Breast epithelium (tissue), 4 donors: ENCODE measurements at regions of chr5 and their contacts with region 1.

Region 1: GRCh38 chr5:140351609-140352334 is 5.4 kb upstream of the HBEGF start:
- DNase-seq: no peak
- H3K4me3 ChIP-seq: no peak overlapping the region
- H3K27ac ChIP-seq: no peak overlapping the region
- H3K4me1 ChIP-seq: no peaks in the 10 kb centered on the region
- H3K27me3 ChIP-seq: no peaks in the 10 kb centered on the region
- CTCF ChIP-seq: peak; percentile 90 to 93 (median 92)
- POLR2A ChIP-seq: no peak

Region 2: GRCh38 chr5:140244525-140245025 is 107.2 kb before region 1 on chr5:
- intact Hi-C with region 1: loop called (anchors 5 kb)
- DNase-seq: peak; percentile 81 to 90
- H3K4me3 ChIP-seq: no peak overlapping the region
- H3K27ac ChIP-seq: peak overlapping the region in 1 of 2 donors; percentile 13
- H3K4me1 ChIP-seq: peaks cover 0 to 6% of the 10 kb centered on the region in 2 donors
- H3K27me3 ChIP-seq: no peaks in the 10 kb centered on the region
- CTCF ChIP-seq: peak; percentile 74 to 95 (median 85)
- POLR2A ChIP-seq: no peak